ENCODE measurements at regions of chr15 and their contacts with region 1.

Region 1: DNA sequence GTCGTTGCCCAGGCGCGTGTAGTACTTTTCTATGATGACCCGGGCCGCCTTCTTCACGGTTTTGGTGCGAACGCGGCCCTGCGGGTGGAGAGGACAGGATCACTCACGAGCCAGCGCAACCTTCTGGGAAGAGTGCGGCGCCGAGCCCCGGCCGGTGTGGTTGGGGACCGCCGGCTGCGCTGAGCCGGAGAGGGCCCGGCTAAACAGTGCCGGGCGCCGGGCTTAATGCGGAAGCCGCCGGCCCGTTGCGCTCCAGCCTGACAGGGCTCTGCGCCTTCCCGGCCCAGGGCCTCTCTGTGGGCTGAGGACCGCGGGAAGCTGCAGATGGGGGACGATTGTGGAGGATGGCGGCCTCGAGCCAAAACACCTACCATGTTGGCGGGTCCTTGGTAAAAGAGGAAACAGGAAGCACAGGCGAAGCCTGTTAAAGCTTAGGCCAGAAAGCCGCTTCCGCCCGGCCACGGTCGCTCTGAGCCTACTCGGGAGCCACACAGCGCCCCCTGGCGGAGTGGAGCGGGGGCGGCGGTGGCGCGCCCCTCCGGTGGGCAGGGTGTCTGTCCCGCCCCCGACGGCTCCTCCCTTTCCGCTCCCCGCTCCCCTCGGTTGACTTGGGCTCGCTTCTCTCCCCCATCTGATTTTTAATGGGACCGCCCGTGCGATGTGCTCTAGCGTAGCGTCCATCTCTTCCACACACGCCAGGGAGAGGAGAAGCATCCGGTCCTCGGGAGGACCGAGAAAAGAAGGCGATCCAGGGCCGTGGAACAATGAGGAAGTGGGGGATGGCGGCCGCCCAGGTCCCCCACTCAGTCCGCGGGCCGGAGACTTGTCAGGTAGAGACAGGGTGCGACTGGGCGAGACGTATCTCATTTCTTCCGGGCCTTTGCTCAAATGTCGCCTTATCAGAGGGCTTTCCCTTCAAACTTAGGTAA is at the start of gene RPS17:
- DNase-seq: peak; percentile 99
- ATAC-seq: peak; percentile 97
- total RNA-seq, gene RPS17: 717 TPM

Region 2: DNA sequence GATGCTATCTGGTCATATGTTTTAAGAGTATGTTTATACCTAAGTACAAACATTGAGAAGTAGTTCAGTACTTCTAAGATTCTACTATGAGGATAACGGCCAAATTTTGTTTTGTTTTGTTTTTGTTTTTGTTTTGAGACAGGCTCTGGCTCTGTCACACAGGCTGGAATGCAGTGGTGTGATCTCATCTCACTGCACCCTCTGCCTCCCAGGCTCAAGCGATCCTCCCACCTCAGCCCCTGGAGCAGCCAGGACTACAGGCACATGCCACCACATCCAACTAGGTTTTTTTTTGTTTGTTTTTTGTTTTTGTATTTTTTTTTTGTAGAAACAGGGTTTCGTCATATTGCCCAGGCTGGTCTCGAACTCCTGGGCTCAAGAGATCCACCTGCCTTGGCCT is 47.5 kb after region 1 on chr15:
- intact Hi-C with region 1: no loop called
- DNase-seq: no peak
- ATAC-seq: no peak

Region 3: GRCh38 chr15:82663186-82663600 is 122.9 kb after region 1 on chr15:
- intact Hi-C with region 1: no loop called
- DNase-seq: peak; percentile 66
- ATAC-seq: no peak

Region 4: GRCh38 chr15:82709421-82710207 is 169.3 kb after region 1 on chr15 and contains the start of gene AP3B2:
- intact Hi-C with region 1: loop called (anchors 10 kb)
- DNase-seq: peak; percentile 84
- ATAC-seq: peak; percentile 98
- total RNA-seq, gene AP3B2: 0.84 TPM

Measured in left ventricle myocardium superior (tissue), 1 donor.